ENCODE measurements at regions of chr1 and their contacts with region 1.

Region 1: DNA sequence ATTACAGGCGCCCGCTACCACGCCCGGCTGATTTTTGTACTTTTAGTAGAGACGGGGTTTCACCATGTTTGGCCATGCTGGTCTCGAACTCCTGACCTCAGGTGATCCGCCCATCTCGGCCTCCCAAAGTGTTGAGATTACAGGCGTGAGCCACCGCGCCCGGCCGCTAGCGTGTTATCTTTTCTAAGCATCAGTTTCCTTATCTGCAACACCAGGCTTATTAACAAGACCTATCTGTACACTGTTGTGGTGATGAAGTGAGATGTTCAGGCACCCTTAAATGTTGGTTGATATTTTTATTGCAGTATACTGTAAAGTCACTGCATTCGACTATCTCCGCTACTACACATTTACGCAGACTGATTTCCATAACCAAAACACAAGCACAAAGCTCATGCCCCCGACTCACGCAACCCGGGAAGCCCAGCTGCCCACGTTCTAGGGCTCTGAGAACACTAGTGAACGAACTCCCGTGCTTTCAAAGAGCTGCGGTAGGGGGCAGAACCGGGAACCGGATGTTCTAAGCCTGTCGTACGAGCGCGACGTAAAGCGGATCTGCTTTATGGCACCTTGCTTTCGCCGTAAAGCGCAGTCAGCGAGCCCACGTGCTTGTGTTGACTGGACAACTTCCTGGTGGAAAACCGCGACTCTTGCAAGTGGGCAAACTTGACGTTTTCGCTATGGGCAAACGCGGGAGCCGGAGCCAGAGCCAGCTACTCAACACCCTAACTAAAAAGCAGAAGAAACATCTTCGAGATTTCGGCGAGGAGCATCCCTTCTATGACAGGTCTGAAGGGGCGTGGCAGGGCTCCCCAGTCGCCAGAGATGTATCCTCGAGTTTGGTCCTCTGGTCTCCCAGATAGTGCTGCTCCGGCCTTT is at the start of gene UTP25:
- DNase-seq: peak; percentile 99
- H3K4me3 ChIP-seq: peak within 1 kb of the TSS; percentile 73 to 85 (median 81)
- H3K27ac ChIP-seq: peak within 1 kb of the TSS; percentile 91
- H3K4me1 ChIP-seq: peaks cover 58% of the 10 kb centered on the region
- H3K27me3 ChIP-seq: no peaks in the 10 kb centered on the region
- CTCF ChIP-seq: peak; percentile 71 to 80
- POLR2A ChIP-seq: peak; percentile 84
- total RNA-seq, gene UTP25: 10.5 and 11.7 TPM in 2 replicates

Region 2: GRCh38 chr1:208201229-208201628 is 1626.4 kb before region 1 on chr1:
- CTCF ChIA-PET with region 1: no interaction called
- POLR2A ChIA-PET with region 1: no interaction called
- dilution Hi-C with region 1: no loop called
- intact Hi-C with region 1: loop called (anchors 1 kb)
- DNase-seq: peak; percentile 96
- H3K4me3 ChIP-seq: no peak overlapping the region
- H3K27ac ChIP-seq: peak overlapping the region; percentile 92
- H3K4me1 ChIP-seq: peaks cover 64% of the 10 kb centered on the region
- H3K27me3 ChIP-seq: no peaks in the 10 kb centered on the region
- CTCF ChIP-seq: no peak
- POLR2A ChIP-seq: no peak

Region 3: GRCh38 chr1:209549443-209550205 is 278.0 kb before region 1 on chr1:
- CTCF ChIA-PET with region 1: no interaction called
- POLR2A ChIA-PET with region 1: no interaction called
- dilution Hi-C with region 1: no loop called
- intact Hi-C with region 1: no loop called
- DNase-seq: no peak
- H3K4me3 ChIP-seq: no peak overlapping the region
- H3K27ac ChIP-seq: no peak overlapping the region
- H3K4me1 ChIP-seq: no peaks in the 10 kb centered on the region
- H3K27me3 ChIP-seq: peaks cover 2 to 5% of the 10 kb centered on the region in 2 experiments
- CTCF ChIP-seq: peak in 1 of 2 donors; percentile 23
- POLR2A ChIP-seq: no peak

Region 4: DNA sequence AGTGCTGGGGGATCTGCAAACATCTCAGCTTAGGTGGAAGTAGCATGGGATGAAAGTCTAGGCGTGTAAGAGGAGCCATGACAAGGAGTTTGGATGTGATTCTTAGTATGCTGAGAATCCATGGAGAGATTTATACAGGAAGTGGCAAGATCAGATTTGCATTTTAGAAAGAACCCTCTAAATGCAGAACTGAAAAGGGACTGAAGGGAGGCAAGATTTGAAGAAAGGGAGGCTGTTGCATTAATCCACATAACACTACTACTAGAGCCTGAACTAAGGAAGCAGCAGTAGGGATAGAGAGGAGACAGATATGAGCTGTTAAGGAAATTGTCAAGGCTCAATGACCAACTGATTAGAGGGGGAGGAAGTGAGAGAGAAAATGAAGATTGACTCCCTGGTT is 53.0 kb before region 1 on chr1:
- CTCF ChIA-PET with region 1: interaction called, 33 read pairs
- POLR2A ChIA-PET with region 1: no interaction called
- dilution Hi-C with region 1: no loop called
- intact Hi-C with region 1: loop called (anchors 1 kb)
- DNase-seq: no peak
- H3K4me3 ChIP-seq: no peak overlapping the region
- H3K27ac ChIP-seq: no peak overlapping the region
- H3K4me1 ChIP-seq: peaks cover 9% of the 10 kb centered on the region
- H3K27me3 ChIP-seq: no peaks in the 10 kb centered on the region
- CTCF ChIP-seq: no peak
- POLR2A ChIP-seq: no peak

Region 5: DNA sequence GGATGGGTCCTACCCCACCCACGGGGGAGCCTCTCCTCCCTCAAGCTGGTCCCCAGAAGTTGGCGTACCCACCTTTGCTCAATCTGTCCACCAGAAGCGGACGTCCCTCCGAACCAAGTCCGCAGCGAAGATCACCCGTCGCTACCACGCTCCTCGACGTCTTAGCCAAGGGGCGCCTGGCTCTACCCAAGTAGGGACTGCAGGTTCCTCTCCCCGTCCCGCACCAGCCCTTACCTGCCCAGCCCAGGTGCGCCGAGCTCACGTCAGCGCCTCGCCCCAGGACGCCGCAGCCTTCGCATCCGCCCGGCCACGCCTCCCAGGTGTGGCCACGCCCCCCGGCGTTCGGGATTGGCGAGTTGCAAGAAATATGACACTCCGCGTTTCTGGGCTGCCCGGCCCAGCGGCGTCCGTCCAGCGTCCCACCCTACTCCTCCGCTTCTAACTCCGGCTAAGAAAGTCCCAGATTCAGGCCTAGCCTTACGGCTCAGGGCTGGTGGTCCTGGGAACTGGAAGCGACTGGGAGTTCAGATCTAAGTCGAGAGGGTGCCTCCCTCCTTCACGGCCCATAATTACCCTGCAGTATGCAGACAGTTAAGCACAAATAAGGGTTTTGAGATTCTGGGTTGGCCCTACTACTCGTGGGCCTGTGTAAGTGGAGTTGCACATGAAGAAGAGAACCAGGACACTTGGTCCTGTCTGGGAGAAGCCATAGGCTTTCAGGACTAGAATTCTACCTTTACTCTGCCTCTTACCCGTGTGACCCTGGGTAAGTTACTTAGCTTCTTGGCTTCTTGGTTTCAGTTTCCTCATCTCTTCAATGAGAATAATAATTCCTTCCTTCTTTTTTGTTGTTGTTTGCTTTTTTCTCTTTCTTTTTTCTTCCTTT is 21.5 kb before region 1 on chr1 and contains the start of gene IRF6:
- CTCF ChIA-PET with region 1: interaction called, 109 read pairs
- POLR2A ChIA-PET with region 1: interaction called, 18 read pairs
- dilution Hi-C with region 1: no loop called
- intact Hi-C with region 1: loop called (anchors 1 kb)
- DNase-seq: peak; percentile 87
- H3K4me3 ChIP-seq: peak within 1 kb of the TSS in 2 of 3 experiments; percentile 51 to 81
- H3K27ac ChIP-seq: peak within 1 kb of the TSS; percentile 47
- H3K4me1 ChIP-seq: peaks cover 38% of the 10 kb centered on the region
- H3K27me3 ChIP-seq: no peaks in the 10 kb centered on the region
- CTCF ChIP-seq: no peak
- POLR2A ChIP-seq: peak; percentile 50
- total RNA-seq, gene IRF6: 22.1 and 42.0 TPM in 2 replicates

Region 6: DNA sequence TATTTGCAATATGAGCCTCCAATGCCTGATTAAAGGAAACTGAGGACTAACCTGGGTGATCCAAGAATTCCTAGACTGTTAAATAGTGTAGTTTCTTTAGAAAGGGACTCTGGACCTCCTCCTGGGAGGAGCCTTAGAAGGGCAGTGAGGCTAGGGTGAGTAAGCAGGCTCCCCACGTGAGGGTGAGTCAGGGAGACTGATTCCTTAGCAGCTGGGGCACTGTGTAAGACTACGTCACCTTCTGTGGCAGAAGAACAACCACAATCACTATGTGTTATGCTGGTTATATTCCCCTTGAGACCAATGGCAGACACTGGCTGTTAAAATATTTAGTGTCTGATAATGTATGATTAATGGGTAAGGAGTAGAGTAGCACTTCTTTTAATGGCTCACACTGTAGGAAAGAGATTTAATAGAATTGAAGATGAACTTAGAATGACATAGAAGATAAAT is 57.1 kb after region 1 on chr1:
- CTCF ChIA-PET with region 1: interaction called, 3 read pairs
- POLR2A ChIA-PET with region 1: interaction called, 3 read pairs
- dilution Hi-C with region 1: no loop called
- intact Hi-C with region 1: loop called (anchors 1 kb)
- DNase-seq: peak; percentile 97
- H3K4me3 ChIP-seq: no peak overlapping the region
- H3K27ac ChIP-seq: peak overlapping the region; percentile 71
- H3K4me1 ChIP-seq: peaks cover 21% of the 10 kb centered on the region
- H3K27me3 ChIP-seq: peaks cover 0 to 7% of the 10 kb centered on the region in 2 experiments
- CTCF ChIP-seq: no peak
- POLR2A ChIP-seq: peak; percentile 40

Region 7: DNA sequence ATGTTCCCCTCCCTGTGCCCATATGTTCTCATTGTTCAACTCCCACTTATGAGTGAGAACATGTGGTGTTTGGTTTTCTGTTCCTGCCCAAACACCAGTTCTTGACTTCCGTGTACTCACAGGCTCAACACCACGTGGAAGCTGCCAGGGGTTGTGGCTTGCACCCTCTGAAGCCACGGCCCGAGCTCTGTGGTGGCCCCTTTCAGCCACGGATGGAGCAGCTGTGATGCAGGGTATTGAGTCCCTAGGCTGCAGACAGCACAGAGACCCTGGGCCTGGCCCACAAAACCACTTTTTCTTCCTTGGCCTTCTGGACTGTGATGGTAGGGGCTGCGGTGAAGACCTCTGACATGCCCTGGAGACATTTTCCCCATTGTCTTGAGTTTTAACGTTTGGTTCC is 222.0 kb after region 1 on chr1:
- CTCF ChIA-PET with region 1: no interaction called
- POLR2A ChIA-PET with region 1: no interaction called
- dilution Hi-C with region 1: no loop called
- intact Hi-C with region 1: no loop called
- DNase-seq: no peak
- H3K4me3 ChIP-seq: no peak overlapping the region
- H3K27ac ChIP-seq: no peak overlapping the region
- H3K4me1 ChIP-seq: no peaks in the 10 kb centered on the region
- H3K27me3 ChIP-seq: no peaks in the 10 kb centered on the region
- CTCF ChIP-seq: no peak
- POLR2A ChIP-seq: no peak

Region 8: GRCh38 chr1:210328746-210329503 is 501.3 kb after region 1 on chr1 and contains the start of gene HHAT:
- CTCF ChIA-PET with region 1: no interaction called
- POLR2A ChIA-PET with region 1: interaction called, 11 read pairs
- dilution Hi-C with region 1: no loop called
- intact Hi-C with region 1: no loop called
- DNase-seq: peak; percentile 59
- H3K4me3 ChIP-seq: peak within 1 kb of the TSS; percentile 46 to 82 (median 55)
- H3K27ac ChIP-seq: peak within 1 kb of the TSS; percentile 75
- H3K4me1 ChIP-seq: peaks cover 6% of the 10 kb centered on the region
- H3K27me3 ChIP-seq: peaks cover 0 to 2% of the 10 kb centered on the region in 2 experiments
- CTCF ChIP-seq: no peak
- POLR2A ChIP-seq: no peak
- total RNA-seq, gene HHAT: 2.4 TPM in 2 replicates

Measured in endothelial cell of umbilical vein (primary cell).